ENCODE measurements at regions of chr7 and their contacts with region 1.

Region 1: DNA sequence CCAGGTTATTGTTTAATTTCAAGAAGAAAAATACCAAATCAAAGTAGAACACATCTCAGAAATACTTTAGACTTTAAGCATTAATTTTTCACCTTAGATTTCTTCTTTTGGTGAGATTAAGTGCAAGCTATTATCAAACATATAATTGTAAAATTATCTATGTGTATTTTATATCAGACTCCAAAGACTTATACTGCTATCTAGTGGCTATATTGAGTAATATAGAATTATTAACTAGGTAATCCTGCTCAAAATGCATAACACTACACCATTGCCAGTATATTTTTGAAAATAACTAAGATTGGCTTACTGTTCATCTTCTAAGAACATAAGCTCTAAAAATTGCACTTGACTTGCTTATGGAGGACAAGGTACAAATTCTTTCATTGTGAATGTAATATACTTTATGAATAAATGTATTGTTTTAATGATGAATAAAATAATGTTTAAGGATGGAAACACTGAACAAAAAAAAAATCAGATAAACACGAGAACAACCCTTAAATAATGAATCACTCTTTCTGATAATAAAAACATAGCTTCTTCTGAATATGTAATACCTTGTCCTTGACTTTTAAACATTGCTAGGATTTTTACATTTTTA is 86.7 kb upstream of the GNAI1 start:
- DNase-seq: no peak
- H3K4me3 ChIP-seq: no peak overlapping the region
- H3K27ac ChIP-seq: no peak overlapping the region
- H3K4me1 ChIP-seq: no peaks in the 10 kb centered on the region
- H3K27me3 ChIP-seq: peaks cover 2% of the 10 kb centered on the region
- CTCF ChIP-seq: peak; percentile 23 to 48

Region 2: GRCh38 chr7:78939669-78940068 is 1108.3 kb before region 1 on chr7:
- CTCF ChIA-PET with region 1: no interaction called
- dilution Hi-C with region 1: no loop called
- in situ Hi-C with region 1: no loop called
- intact Hi-C with region 1: loop called (anchors 10 kb)
- DNase-seq: no peak
- H3K4me3 ChIP-seq: no peak overlapping the region
- H3K27ac ChIP-seq: no peak overlapping the region
- H3K4me1 ChIP-seq: no peaks in the 10 kb centered on the region
- H3K27me3 ChIP-seq: no peaks in the 10 kb centered on the region
- CTCF ChIP-seq: no peak

Region 3: DNA sequence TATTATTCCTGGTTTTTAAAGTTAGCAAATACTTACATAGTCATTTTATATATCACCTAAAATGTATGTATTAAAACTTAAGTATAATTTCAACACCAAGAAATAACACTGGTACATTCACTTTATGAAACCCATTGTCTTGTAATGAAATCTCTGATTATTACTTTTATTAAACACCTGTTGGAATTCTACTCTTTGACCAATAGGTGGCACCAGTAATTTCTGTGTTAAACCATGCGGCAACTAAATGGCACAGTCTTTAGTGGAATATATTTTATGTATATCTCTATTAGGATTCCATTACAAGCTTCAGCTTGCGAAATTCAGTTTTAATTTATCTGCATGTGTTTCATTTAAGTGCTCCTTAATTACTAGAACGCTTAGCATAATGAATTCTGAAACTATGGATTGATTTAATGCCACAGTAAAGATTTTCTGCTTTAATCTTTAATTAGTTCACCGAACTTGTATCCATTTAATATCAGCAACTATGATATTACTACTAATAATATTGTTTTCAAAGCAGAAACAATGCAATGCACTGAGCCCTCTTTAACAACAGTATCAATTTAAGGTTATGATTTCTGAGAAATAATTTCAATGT is 775.8 kb before region 1 on chr7:
- CTCF ChIA-PET with region 1: no interaction called
- dilution Hi-C with region 1: no loop called
- in situ Hi-C with region 1: loop called in 1 of 2 experiments (anchors 25 kb)
- intact Hi-C with region 1: loop called (anchors 5 kb)
- DNase-seq: no peak
- H3K4me3 ChIP-seq: no peak overlapping the region
- H3K27ac ChIP-seq: no peak overlapping the region
- H3K4me1 ChIP-seq: peaks cover 2% of the 10 kb centered on the region
- H3K27me3 ChIP-seq: no peaks in the 10 kb centered on the region
- CTCF ChIP-seq: peak; percentile 63 to 70

Region 4: DNA sequence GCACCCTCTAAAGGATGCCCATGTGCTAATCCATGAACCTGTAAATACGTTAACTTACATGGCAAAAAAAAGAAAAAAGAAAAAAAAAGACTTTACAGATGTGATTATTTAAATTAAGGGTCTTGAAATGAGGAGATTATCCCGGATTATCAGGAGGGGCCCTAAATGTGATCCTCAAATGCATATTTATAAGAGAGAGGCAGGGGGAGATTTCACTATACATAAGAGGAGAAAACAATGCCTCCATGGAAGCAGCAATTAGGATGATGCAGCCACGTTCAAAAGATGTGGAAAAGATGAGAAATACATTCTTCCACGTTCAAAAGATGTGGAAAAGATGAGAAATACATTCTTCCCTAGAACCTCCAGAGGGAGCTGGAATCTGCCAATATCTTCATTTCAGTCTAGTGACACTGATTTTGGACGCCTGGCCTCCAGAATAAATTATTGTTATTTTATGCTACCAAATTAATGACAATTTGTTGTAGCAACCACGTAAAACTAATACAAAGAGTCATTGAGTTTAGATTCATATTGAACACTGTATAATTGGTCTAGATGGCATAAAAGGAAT is 241.7 kb before region 1 on chr7:
- CTCF ChIA-PET with region 1: no interaction called
- dilution Hi-C with region 1: no loop called
- in situ Hi-C with region 1: no loop called
- intact Hi-C with region 1: loop called (anchors 1 kb)
- DNase-seq: peak; percentile 8
- H3K4me3 ChIP-seq: no peak overlapping the region
- H3K27ac ChIP-seq: no peak overlapping the region
- H3K4me1 ChIP-seq: no peaks in the 10 kb centered on the region
- H3K27me3 ChIP-seq: peaks cover 2% of the 10 kb centered on the region
- CTCF ChIP-seq: peak; percentile 29 to 47

Region 5: DNA sequence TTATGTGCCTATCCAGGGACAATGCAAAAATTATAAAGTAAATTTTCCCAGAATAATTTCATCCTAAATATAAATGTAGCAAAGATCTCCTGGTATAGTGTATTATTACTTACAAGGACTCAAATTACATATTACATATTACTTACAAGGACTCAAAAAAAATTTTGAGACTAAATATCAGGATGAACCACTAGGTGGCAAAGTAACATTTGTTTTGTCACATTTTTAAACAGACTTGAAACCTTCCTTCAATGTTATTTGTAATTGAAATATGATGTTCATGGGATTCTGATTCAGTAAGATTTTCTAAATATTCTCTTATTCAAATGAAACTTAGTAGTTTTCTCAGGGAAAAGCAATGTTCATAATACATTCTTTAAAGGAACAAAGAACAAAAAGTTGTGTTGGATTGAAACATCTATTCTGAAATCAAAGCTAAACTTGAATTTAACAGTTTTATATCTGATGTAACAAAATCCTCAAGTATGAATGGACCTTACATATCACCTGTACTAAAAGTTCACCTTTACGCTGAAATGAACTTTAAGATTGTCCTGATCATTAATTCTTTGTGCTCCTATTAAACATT is 12.4 kb after region 1 on chr7:
- CTCF ChIA-PET with region 1: no interaction called
- dilution Hi-C with region 1: no loop called
- in situ Hi-C with region 1: no loop called
- intact Hi-C with region 1: no loop called
- DNase-seq: peak; percentile 43
- H3K4me3 ChIP-seq: no peak overlapping the region
- H3K27ac ChIP-seq: no peak overlapping the region
- H3K4me1 ChIP-seq: no peaks in the 10 kb centered on the region
- H3K27me3 ChIP-seq: no peaks in the 10 kb centered on the region
- CTCF ChIP-seq: peak; percentile 38 to 51

Region 6: GRCh38 chr7:80154656-80155325 is 106.8 kb after region 1 on chr7:
- CTCF ChIA-PET with region 1: no interaction called
- dilution Hi-C with region 1: no loop called
- in situ Hi-C with region 1: no loop called
- intact Hi-C with region 1: no loop called
- DNase-seq: no peak
- H3K4me3 ChIP-seq: no peak overlapping the region
- H3K27ac ChIP-seq: no peak overlapping the region
- H3K4me1 ChIP-seq: peaks cover 35% of the 10 kb centered on the region
- H3K27me3 ChIP-seq: no peaks in the 10 kb centered on the region
- CTCF ChIP-seq: no peak

Region 7: DNA sequence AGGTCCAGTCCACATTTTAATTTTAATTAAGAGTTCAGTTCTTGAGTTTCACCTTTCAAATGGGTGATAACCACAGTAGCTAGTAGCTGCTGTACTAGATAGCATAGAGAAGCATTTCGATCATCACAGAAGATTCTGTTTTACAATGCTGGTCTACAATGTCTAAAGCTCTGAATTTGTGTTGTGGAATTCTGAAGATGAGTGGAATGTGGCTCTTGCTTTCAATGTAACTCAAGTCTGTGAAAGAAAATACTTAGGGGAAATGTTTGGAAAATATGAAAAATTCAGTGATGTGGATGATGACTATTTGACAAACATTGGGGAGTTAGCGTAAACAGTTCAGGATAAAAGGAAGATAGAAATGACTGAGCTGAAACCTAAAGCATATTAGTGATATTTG is 324.5 kb after region 1 on chr7:
- CTCF ChIA-PET with region 1: no interaction called
- dilution Hi-C with region 1: no loop called
- in situ Hi-C with region 1: no loop called
- intact Hi-C with region 1: no loop called
- DNase-seq: no peak
- H3K4me3 ChIP-seq: no peak overlapping the region
- H3K27ac ChIP-seq: no peak overlapping the region
- H3K4me1 ChIP-seq: no peaks in the 10 kb centered on the region
- H3K27me3 ChIP-seq: no peaks in the 10 kb centered on the region
- CTCF ChIP-seq: no peak